ENCODE measurements at regions of chr17 and their contacts with region 1.

Region 1: DNA sequence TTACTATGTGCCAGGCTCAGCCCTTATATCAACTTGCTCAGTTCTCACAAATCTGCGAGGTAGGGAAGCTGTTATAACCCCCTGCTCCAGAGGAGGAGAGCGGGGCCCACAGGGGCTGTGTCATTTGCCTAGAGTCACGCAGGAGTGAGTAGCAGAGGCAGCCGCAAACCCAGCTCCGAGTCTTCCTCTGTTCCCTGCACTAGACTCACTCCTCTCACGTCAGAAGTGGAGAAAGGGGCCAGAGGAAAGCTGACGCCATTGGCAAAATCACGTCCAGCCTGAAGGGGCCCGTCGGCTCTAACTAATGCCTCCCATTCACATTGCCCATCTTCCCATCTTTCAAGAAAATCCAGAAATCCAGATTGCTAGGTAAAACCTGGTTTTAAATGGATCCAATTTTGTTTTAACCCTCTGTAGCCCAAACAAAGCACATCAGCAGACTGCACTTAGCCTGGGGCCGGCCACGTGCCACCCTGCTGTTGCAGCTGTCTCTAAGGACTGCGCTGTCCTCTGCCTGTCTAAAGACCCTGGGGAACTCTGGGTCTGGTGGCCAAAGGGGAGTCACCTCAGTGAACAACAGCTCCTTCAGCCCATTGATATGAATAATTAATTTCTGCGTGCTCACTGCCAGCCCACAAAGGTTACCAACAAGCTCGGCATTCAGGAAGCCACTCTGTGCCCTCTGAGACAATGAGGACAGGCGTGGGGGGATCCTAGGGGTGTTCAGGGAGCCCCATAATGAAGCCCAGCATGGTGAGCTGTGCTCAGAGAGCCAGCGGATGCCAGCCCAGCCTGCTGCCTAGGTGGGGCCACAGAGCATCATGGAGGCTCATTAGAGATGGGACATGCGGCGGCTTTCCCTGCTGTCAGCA is 36.7 kb upstream of the ABR start:
- DNase-seq: peak; percentile 92
- H3K4me3 ChIP-seq: peak overlapping the region; percentile 54
- H3K27ac ChIP-seq: peak overlapping the region; percentile 96
- H3K4me1 ChIP-seq: peaks cover 96% of the 10 kb centered on the region
- CTCF ChIP-seq: no peak

Region 2: GRCh38 chr17:1179818-1180742 is 36.4 kb before region 1 on chr17 and contains the start of gene ABR:
- CTCF ChIA-PET with region 1: no interaction called
- POLR2A ChIA-PET with region 1: interaction called, 8 read pairs
- intact Hi-C with region 1: loop called (anchors 1 kb)
- DNase-seq: peak; percentile 62
- H3K4me3 ChIP-seq: peak within 1 kb of the TSS; percentile 74
- H3K27ac ChIP-seq: peak within 1 kb of the TSS; percentile 90
- H3K4me1 ChIP-seq: peaks cover 55% of the 10 kb centered on the region
- CTCF ChIP-seq: no peak
- total RNA-seq, gene ABR: 153 and 164 TPM in 2 replicates

Region 3: GRCh38 chr17:1206026-1206777 is 10.3 kb before region 1 on chr17:
- CTCF ChIA-PET with region 1: interaction called, 21 read pairs
- POLR2A ChIA-PET with region 1: interaction called, 54 read pairs
- intact Hi-C with region 1: no loop called
- DNase-seq: peak; percentile 11
- H3K4me3 ChIP-seq: no peak overlapping the region
- H3K27ac ChIP-seq: no peak overlapping the region
- H3K4me1 ChIP-seq: peaks cover 52% of the 10 kb centered on the region
- CTCF ChIP-seq: no peak

Region 4: GRCh38 chr17:1229432-1229899 is 13.0 kb after region 1 on chr17:
- CTCF ChIA-PET with region 1: interaction called, 6 read pairs
- POLR2A ChIA-PET with region 1: interaction called, 36 read pairs
- intact Hi-C with region 1: loop called (anchors 1 kb)
- DNase-seq: peak; percentile 85
- H3K4me3 ChIP-seq: peak overlapping the region; percentile 88
- H3K27ac ChIP-seq: peak overlapping the region; percentile 86
- H3K4me1 ChIP-seq: peaks cover 32% of the 10 kb centered on the region
- CTCF ChIP-seq: no peak

Region 5: GRCh38 chr17:1241929-1242328 is 25.5 kb after region 1 on chr17:
- CTCF ChIA-PET with region 1: no interaction called
- POLR2A ChIA-PET with region 1: no interaction called
- intact Hi-C with region 1: no loop called
- DNase-seq: no peak
- H3K4me3 ChIP-seq: no peak overlapping the region
- H3K27ac ChIP-seq: no peak overlapping the region
- H3K4me1 ChIP-seq: no peaks in the 10 kb centered on the region
- CTCF ChIP-seq: no peak

Measured in OCI-LY7 (cell line).